ENCODE measurements at regions of chr15 and their contacts with region 1.

Region 1: GRCh38 chr15:73972984-73973682 is 19.0 kb downstream of the STOML1 start:
- DNase-seq: peak; percentile 83 to 90 (median 87)
- ATAC-seq: peak; percentile 85 to 95 (median 92)
- H3K4me3 ChIP-seq: peak overlapping the region in 9 of 12 donors; percentile 12 to 43 (median 32)
- H3K27ac ChIP-seq: peak overlapping the region in 1 of 12 donors; percentile 13
- H3K4me1 ChIP-seq: peaks cover 0 to 12% (median 8%) of the 10 kb centered on the region in 12 donors
- H3K27me3 ChIP-seq: peaks cover 0 to 6% (median 0%) of the 10 kb centered on the region in 9 donors
- CTCF ChIP-seq: peak; percentile 69 to 94 (median 84)
- POLR2A ChIP-seq: no peak

Region 2: DNA sequence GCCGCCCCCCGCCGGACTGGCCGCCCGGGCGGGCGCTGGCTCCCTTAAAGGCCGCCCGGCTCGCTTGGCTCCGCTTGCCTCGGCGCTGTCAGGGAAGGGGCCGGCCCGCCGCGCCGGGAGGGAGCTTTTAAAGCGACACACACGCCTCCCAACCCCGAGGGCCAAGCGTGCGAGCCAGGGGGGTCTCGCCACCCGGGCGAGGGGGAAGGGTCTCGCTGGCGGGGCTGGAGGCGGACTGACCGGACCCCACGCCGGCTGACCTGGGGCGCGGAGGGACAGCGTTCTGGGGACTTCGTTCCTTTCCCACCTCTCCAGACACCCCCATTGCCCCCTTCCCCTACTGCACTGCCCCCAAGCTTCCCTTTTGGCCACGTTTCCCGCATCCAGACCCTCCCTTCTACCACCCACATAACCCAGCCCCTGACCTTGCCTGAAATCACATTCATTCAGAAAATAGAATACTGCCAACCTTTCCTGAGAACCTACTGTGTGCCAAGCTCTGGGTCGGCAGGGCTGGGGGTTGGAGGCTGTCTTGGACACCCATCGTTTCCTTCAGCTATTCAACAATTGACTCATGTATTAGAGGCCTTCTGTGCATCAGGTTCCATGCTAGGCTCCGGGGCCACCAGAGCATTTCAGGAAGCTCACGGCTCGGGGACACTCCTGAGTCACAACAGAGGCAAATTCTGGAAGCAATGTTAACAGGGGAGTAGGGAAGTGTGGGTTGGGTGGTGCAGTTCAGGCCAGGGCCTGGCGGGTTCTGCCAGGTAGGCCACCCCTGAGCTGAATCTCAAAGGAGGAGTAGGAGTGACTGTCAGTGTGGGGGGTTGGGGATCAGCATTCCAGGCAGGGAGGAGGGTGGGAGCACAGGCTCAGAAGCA is 219.6 kb before region 1 on chr15 and contains the start of gene INSYN1:
- intact Hi-C with region 1: no loop called
- DNase-seq: peak; percentile 65 to 79 (median 68)
- ATAC-seq: peak in 3 of 4 donors; percentile 73 to 79 (median 75)
- H3K4me3 ChIP-seq: peak within 1 kb of the TSS; percentile 57 to 92 (median 70)
- H3K27ac ChIP-seq: peak within 1 kb of the TSS in 10 of 12 donors; percentile 40 to 80 (median 56)
- H3K4me1 ChIP-seq: peaks cover 0 to 40% (median 10%) of the 10 kb centered on the region in 12 donors
- H3K27me3 ChIP-seq: peaks cover 0 to 43% (median 7%) of the 10 kb centered on the region in 9 donors
- CTCF ChIP-seq: no peak
- POLR2A ChIP-seq: no peak
- total RNA-seq, gene INSYN1: 51.5 to 182 (median 83.0) TPM

Region 3: DNA sequence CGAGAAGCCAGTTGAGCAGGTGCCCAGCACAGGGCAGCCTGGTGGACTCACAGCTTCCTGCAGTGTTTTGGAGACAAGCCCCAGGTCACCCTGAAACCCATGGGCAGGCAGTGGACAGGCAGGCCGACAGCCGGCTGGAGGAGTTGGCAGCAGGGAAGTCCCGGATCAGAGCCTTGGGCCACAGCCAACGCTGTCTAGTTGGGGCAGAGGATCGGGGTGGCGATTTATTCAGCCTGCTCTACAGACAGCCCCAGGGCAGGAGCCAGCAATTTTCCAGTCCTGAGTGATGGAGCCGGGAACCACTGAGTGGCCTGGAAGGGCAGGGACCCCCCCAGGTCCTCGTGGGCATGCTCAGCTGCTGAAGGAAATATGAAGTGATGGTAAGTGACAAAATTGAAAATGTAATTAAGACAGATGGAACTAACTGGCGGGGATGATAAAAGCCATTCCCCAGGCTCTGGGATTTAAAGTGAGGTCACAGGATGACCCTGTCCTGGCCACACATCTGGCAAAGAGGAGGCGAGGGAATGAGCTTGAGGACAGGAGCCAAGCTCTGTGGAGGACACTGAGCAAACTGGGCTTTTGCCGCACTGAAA is 134.2 kb before region 1 on chr15:
- intact Hi-C with region 1: no loop called
- DNase-seq: peak; percentile 81 to 93 (median 85)
- ATAC-seq: peak; percentile 97 to 98 (median 98)
- H3K4me3 ChIP-seq: no peak overlapping the region
- H3K27ac ChIP-seq: peak overlapping the region in 6 of 12 donors; percentile 15 to 78 (median 48)
- H3K4me1 ChIP-seq: peaks cover 0 to 12% (median 2%) of the 10 kb centered on the region in 12 donors
- H3K27me3 ChIP-seq: peaks cover 0 to 4% (median 0%) of the 10 kb centered on the region in 9 donors
- CTCF ChIP-seq: peak in 3 of 12 donors; percentile 5 to 16 (median 8)
- POLR2A ChIP-seq: no peak

Region 4: DNA sequence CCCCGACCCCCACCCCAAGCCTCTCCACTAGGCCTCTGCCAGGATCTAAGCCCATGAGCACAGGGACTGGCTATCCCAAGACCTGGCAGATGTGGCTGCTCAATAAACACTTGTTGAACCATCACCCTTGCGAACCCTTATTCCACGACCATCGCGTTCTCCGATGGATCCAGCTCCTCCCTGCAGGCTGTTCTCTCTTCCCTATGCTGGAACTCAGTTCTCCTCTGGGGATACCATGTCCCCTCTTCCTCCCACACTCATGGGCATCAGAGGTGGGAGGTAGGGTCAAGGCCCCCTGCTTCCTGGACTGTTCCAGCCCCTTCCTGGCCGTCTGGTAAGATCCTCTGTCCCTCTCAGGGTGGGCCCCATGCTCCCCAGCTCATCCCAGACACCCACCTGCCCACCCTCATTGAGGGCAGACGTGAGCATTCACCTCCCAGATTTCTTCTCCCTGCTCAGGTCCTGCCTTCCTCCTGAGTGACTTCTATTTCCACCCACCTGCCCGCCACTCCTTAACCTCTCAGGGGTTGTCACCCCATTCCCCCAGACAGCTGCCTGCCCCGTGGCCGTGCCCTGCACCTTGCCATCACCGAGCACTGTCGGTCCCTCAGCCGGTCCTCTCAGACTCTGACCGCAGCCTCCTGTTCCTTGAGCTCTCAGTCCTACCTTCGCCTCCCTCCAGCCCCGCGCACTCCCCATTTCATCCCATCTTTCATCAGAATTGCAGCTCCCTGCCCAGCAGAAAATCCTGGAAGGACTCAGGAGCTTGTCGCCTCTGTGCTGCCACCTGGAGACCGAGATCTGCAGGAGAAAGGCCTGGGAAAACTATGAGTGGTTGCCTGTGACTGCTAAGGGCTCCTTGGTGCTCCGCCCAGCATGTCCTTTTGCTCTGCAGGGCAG is 63.4 kb after region 1 on chr15:
- intact Hi-C with region 1: loop called in 8 of 10 experiments (anchors 1 to 10 kb)
- DNase-seq: peak in 2 of 5 donors; percentile 61 to 71
- ATAC-seq: peak in 2 of 4 donors; percentile 23 to 54
- H3K4me3 ChIP-seq: no peak overlapping the region
- H3K27ac ChIP-seq: peak overlapping the region in 1 of 12 donors; percentile 19
- H3K4me1 ChIP-seq: peaks cover 3 to 58% (median 36%) of the 10 kb centered on the region in 12 donors
- H3K27me3 ChIP-seq: no peaks in the 10 kb centered on the region
- CTCF ChIP-seq: peak in 11 of 12 donors; percentile 30 to 68 (median 56)
- POLR2A ChIP-seq: no peak

Region 5: DNA sequence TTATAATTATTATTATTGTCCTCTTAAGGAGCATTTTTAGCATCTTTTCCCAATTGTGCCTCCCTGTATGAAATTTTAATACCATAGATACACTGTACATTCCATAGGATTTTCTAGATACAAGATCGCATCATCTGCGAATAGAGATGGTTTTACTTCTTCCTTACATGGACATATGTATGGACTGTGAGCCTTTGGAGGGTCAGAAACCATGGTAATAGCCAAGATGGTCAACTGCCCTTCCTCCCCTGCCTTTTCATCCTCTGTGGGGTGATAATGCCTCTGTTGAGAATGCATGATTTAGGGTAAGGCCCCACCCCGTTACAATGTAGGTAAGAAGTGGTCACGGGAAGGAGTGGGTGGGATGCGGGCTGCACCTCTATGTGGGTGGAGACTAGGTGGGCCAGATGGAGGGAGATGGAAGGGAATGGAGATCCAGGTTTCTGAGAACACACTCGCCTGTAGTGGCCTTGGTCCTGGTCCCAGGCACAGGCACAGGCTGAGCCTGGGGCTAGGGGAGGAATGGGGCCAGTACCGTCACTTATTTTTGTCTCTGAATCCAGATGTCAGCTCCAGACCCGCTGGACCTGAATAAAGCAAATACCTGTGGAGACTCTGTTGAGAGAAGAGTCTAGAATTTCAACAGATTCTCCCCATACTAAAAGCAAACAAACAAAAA is 77.6 kb after region 1 on chr15:
- intact Hi-C with region 1: no loop called
- DNase-seq: peak in 2 of 5 donors; percentile 48 to 67
- ATAC-seq: peak in 3 of 4 donors; percentile 24 to 55 (median 43)
- H3K4me3 ChIP-seq: peak overlapping the region in 1 of 12 donors; percentile 17
- H3K27ac ChIP-seq: peak overlapping the region; percentile 33 to 94 (median 78)
- H3K4me1 ChIP-seq: peaks cover 0 to 66% (median 31%) of the 10 kb centered on the region in 12 donors
- H3K27me3 ChIP-seq: no peaks in the 10 kb centered on the region
- CTCF ChIP-seq: no peak
- POLR2A ChIP-seq: no peak

Region 6: DNA sequence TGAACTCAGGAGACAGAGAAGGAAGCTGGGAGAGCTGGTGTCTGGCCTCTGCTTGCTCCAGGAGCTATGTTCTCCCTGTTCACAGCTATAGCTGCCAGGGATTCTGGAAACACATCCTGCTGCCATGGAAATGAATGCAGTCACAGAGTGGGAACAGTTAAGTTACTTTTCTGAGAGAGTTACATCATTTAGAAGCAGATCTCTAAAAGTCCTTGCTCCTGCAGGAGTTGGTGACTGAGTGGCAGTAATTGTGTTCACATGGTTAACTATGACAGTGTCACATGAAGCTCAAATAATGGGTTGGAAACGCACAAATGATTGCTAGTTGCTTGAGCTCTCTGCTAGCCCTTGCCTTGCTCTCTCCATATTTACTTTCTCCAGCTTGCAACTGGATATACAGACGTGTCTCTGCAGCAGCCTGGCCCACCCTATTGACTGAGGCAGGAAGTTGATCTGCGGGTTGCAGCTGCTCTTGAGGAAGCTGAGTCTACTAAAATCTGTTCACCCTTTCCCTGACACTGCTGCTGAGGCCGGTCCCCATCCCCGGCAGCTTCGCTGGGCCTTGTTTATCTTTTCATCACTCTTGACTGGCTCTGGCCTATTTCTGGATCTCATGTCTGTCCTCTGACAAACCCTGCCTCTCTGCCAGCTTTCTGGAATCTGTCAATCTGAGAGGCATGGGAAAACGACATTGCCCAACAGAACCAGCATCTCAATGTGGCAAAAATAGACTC is 183.7 kb after region 1 on chr15:
- intact Hi-C with region 1: no loop called
- DNase-seq: peak in 2 of 5 donors; percentile 62 to 69
- ATAC-seq: peak; percentile 87 to 94 (median 90)
- H3K4me3 ChIP-seq: no peak overlapping the region
- H3K27ac ChIP-seq: peak overlapping the region in 11 of 12 donors; percentile 7 to 72 (median 46)
- H3K4me1 ChIP-seq: peaks cover 3 to 47% (median 31%) of the 10 kb centered on the region in 12 donors
- H3K27me3 ChIP-seq: peaks cover 0 to 4% (median 0%) of the 10 kb centered on the region in 9 donors
- CTCF ChIP-seq: no peak
- POLR2A ChIP-seq: no peak

Region 7: DNA sequence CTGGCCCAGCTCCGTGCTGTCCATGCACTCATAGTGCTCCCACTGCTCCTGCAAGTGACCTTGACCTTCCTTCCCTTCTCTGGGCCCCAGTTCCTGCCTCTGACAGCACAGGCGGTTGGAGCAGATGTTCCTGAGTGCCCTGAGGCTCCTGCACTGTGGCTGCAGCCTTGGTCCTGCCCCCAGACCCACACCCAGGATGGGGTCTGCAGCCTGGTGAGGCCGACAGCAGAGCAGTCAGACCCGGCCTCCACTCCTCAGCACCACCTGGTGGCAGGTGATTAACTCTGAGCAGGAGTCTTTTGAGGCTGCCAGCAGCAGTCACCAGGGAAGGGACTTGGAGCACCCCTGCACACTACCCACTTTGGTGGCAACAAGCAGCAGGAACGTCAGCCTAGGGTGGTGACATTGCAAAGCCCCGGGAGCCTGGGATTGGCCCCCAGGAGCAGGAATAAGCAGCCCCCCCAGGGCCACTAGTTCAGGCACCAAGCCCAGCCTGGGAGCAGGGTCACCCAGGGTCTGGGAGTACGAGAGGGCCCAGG is 329.8 kb after region 1 on chr15:
- intact Hi-C with region 1: loop called in 3 of 10 experiments (anchors 5 to 10 kb)
- DNase-seq: peak in 2 of 5 donors; percentile 40 to 43
- ATAC-seq: peak in 3 of 4 donors; percentile 47 to 65 (median 59)
- H3K4me3 ChIP-seq: no peak overlapping the region
- H3K27ac ChIP-seq: no peak overlapping the region
- H3K4me1 ChIP-seq: peaks cover 0 to 12% (median 0%) of the 10 kb centered on the region in 12 donors
- H3K27me3 ChIP-seq: peaks cover 0 to 47% (median 12%) of the 10 kb centered on the region in 9 donors
- CTCF ChIP-seq: peak; percentile 47 to 76 (median 61)
- POLR2A ChIP-seq: no peak

Region 8: GRCh38 chr15:74307827-74308644 is 334.9 kb after region 1 on chr15:
- intact Hi-C with region 1: loop called in 4 of 10 experiments (anchors 5 to 10 kb)
- DNase-seq: peak in 4 of 5 donors; percentile 38 to 61 (median 50)
- ATAC-seq: peak; percentile 78 to 91 (median 82)
- H3K4me3 ChIP-seq: no peak overlapping the region
- H3K27ac ChIP-seq: no peak overlapping the region
- H3K4me1 ChIP-seq: peaks cover 0 to 12% (median 0%) of the 10 kb centered on the region in 12 donors
- H3K27me3 ChIP-seq: peaks cover 0 to 36% (median 12%) of the 10 kb centered on the region in 9 donors
- CTCF ChIP-seq: peak; percentile 47 to 78 (median 72)
- POLR2A ChIP-seq: no peak